Tibial artery (tissue), 4 donors: ENCODE measurements at regions of chr4 and their contacts with region 1.

Region 1: DNA sequence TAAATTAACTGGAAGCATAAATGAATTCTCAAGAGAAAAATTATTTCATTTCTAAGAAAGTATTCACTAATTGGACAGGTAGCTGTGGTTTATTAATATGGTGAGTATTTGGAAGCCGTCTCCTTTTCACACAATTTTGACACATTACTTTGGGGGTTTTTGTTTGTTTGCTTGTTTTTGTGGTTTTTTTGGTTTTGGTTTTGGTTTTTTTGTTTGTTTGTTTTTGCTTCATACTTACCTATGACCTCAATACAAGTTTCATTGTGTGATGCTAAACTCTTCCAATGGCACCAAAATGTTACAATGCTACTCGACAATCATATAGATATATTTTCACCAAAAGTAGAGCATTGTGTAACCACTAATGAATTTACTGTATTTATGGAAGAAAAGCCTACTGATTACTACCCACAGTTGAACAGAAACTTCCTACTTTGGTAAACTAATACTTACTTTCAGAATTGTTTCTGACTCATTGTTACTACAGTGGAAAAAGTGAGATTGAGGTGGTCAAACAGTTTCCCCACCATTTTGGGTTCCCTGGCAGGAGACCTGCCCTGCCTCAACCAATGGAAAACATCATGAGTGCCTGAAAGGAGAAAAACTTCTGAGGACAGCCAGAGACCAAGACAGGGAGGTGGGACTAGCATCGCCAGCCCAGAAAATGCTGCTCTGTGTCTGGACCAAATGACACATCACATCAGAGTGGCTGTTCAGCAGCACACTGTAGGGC is 443.1 kb downstream of the HNRNPD start:
- DNase-seq: no peak
- H3K4me3 ChIP-seq: no peak overlapping the region
- H3K27ac ChIP-seq: no peak overlapping the region
- H3K4me1 ChIP-seq: no peaks in the 10 kb centered on the region
- H3K27me3 ChIP-seq: no peaks in the 10 kb centered on the region
- CTCF ChIP-seq: no peak

Region 2: DNA sequence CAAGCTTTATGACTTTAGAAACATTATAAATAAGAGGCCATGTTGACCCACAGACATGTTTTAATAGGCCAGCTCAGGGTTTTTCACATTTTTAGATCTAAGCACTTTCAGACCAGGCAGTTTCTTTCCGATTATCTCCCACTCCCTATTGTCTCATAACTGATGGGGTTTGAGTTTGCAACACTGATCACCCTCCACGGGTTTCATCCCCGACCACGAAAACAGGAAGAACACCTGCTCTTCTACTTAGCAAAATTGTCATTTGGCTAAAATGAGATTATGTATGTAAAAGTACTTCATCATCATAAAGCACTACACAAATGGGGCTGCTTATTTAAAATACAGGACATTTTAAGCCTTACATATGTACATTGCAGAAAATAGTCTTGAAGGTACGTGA is 35.2 kb after region 1 on chr4:
- intact Hi-C with region 1: no loop called
- DNase-seq: no peak
- H3K4me3 ChIP-seq: no peak overlapping the region
- H3K27ac ChIP-seq: no peak overlapping the region
- H3K4me1 ChIP-seq: no peaks in the 10 kb centered on the region
- H3K27me3 ChIP-seq: no peaks in the 10 kb centered on the region
- CTCF ChIP-seq: no peak

Region 3: GRCh38 chr4:82739316-82740179 is 808.9 kb after region 1 on chr4:
- intact Hi-C with region 1: loop called (anchors 10 kb)
- DNase-seq: peak; percentile 55 to 76
- H3K4me3 ChIP-seq: no peak overlapping the region
- H3K27ac ChIP-seq: no peak overlapping the region
- H3K4me1 ChIP-seq: no peaks in the 10 kb centered on the region
- H3K27me3 ChIP-seq: no peaks in the 10 kb centered on the region
- CTCF ChIP-seq: peak; percentile 54 to 63